RWPE1 (cell line): ENCODE measurements at regions of chr16 and their contacts with region 1.

Region 1: DNA sequence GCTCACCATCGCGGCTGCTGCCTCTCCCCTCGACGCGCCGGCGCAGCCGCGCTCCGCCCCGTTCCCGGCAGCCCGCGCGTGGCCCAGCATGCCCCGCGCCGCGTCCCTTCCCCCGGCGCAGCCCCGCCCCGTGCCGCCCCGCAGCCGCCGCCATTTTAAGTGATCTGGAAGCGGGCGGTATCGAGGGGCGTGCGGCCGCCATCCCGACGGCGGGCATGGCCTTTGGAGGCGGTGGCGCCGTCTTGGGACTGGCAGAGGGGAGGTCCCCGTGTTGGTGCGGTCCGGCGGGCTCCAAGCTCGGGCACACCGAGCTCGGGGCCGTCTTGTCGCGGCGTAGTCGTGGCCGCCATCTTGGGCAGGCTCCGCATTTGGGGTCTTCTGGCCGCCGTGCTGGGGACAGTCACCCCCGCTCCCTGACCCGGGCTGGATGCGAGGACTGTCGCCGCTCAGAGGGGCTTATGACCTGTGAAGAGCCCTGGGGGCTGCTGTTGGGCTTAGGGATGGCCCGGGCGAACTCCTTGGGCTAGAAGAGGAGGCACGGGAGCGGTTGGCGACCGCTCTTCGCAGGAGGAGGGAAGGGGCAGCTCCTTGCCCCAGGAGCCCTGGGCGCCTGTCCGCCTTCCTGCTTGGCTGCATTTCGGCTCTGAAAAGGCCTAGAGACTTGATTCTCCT is at the start of gene ELOB:
- DNase-seq: peak; percentile 92
- H3K27ac ChIP-seq: peak within 1 kb of the TSS; percentile 93
- CTCF ChIP-seq: no peak

Region 2: DNA sequence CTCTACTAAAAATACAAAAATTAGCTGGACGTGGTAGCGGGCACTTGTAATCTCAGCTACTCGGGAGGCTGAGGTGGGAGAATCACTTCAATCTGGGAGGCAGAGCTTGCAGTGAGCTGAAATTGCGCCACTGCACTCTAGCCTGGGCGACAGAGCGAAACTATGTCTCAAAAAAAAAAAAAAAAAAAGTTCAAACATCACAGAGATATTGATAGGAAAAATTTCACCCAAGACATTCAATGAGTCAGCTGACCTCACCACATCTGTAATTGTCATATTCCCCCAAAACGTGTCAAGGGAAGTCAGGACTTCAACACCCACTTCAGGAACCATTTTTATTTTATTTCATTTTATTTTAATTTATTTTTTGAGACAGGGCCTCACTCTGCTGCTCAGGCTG is 49.3 kb before region 1 on chr16:
- CTCF ChIA-PET with region 1: no interaction called
- POLR2A ChIA-PET with region 1: no interaction called
- DNase-seq: no peak
- H3K27ac ChIP-seq: no peak overlapping the region
- CTCF ChIP-seq: no peak

Region 3: DNA sequence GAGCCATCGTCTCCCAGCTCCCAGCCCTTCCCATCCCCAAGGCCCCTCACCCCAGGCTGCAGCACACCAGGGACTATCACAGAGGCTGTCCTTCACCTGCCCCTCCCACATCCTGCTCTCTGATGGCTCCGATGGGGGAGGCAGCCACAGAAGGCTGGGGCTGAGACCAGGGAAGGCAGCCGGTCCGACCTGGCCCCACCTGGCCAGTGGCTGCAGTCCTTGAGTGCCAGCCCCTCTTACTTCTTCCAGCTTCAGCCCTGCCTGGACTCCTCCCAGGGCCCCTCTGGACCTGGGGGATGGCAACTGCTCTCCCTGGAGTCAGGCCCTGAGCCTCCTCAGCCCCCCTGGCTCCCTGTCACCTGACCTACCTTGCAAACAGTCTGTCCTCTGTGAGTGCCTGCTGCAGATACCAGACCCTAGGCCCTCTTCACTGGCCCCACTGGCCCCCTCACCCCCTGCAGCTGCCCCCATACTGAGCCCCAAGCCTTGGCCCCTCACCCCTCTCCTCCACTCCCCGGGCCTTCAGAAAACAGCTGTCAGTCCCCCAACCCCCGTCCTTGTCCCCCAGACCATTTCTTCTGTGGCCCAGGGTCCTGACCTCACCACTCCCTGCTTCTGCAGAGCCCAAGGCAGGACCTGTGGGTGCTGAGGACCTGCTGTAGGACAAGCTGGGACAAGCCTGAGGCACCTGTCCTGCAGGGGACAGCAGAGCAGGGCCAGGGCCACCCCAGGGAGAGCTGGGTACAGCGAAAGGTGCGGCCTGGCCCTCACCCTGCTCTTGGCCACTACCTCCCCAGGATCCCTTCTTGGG is 37.5 kb before region 1 on chr16:
- CTCF ChIA-PET with region 1: no interaction called
- POLR2A ChIA-PET with region 1: no interaction called
- DNase-seq: no peak
- H3K27ac ChIP-seq: peak overlapping the region; percentile 42
- CTCF ChIP-seq: no peak

Region 4: GRCh38 chr16:2791174-2791573 is 13.8 kb after region 1 on chr16:
- CTCF ChIA-PET with region 1: no interaction called
- POLR2A ChIA-PET with region 1: interaction called, 11 read pairs
- DNase-seq: no peak
- H3K27ac ChIP-seq: no peak overlapping the region
- CTCF ChIP-seq: no peak

Region 5: GRCh38 chr16:2846511-2847310 is 69.3 kb after region 1 on chr16:
- CTCF ChIA-PET with region 1: no interaction called
- POLR2A ChIA-PET with region 1: no interaction called
- DNase-seq: peak; percentile 70
- H3K27ac ChIP-seq: peak overlapping the region; percentile 88
- CTCF ChIP-seq: no peak